Activated CD8-positive, alpha-beta T cell treated with anti-CD3 and anti-CD28 coated beads for 36 hours (primary cell): ENCODE measurements at regions of chr14 and their contacts with region 1.

Region 1: DNA sequence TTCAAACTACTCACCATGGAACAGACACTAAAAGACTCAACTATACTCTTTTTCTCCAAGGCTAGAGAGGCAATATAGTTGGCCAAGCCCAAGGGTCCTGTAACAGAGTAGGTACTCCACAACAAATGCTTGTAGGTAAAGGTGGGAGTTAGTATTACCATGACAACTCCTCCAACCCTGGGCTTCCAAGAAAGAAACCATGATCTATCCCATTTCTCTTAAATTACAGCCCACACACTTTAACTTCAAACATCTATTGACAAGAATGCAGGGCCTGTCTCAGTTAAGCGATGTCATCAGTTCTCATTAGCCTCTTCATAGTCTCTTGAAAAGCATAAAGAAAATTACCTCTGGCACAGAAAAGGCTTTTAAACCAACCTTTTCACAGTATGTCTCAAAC is 25.0 kb downstream of the ERH start:
- DNase-seq: peak; percentile 15
- ATAC-seq: peak; percentile 88
- H3K4me3 Mint-ChIP-seq: no peak overlapping the region
- H3K27ac Mint-ChIP-seq: peak overlapping the region; percentile 91
- H3K4me1 Mint-ChIP-seq: peaks cover 20% of the 10 kb centered on the region
- H3K27me3 Mint-ChIP-seq: no peaks in the 10 kb centered on the region
- CTCF ChIP-seq: no peak

Region 2: DNA sequence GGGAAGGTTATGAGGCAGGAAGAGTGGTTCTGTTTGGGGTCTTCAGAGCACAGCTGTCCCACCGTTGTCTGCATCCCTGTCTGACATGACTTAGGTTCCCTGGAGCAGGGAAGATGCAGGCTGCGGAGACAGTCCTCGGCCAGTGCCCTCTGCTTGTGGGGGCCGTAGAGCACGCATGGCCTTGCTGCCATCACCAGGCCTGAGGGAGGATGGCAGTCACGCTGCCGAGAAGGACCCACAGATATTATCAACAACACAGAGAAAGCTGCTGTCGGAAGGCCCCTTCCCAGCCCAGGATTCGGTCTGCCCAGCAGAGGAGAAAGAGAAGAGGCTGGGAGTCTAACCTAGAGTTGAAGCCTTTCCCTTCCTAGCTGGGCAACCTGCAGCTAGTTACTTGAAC is 10.0 kb before region 1 on chr14:
- CTCF ChIA-PET with region 1: interaction called, 5 read pairs
- POLR2A ChIA-PET with region 1: interaction called, 14 read pairs
- intact Hi-C with region 1: no loop called
- DNase-seq: no peak
- ATAC-seq: no peak
- H3K4me3 Mint-ChIP-seq: no peak overlapping the region
- H3K27ac Mint-ChIP-seq: no peak overlapping the region
- H3K4me1 Mint-ChIP-seq: peaks cover 21% of the 10 kb centered on the region
- H3K27me3 Mint-ChIP-seq: no peaks in the 10 kb centered on the region
- CTCF ChIP-seq: no peak